Panc1 (cell line): ENCODE measurements at regions of chr5 and their contacts with region 1.

Region 1: DNA sequence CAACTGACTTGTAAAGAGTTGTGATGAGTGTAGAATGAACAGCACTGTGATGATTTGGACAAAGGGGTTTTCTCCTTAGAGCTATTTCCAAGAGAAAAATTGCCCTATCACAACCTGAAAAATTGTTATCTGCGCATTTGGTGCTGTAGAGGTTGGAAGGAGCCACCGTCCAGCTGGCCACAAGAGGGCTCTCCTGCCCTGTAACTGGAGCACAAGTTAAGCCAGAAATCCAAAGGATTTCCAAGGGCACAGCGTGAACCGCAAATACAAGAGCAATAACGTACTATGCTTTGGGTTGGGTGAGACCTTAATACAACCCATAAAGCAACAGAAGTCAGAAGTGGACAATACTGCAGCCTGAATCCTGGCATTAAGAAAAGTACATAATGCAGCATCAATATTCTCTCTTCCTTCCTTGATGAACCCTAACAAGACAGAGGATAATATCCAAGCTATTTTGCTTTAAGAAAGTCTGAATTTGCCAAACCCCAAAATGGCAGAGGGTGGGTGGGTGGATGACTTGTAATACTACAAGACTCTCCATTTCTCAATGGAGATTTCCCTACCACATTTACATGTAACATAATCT is 56.8 kb upstream of the SMIM32 start:
- DNase-seq: peak; percentile 43
- ATAC-seq: peak; percentile 93
- H3K4me3 ChIP-seq: no peak overlapping the region
- H3K27ac ChIP-seq: no peak overlapping the region
- H3K4me1 ChIP-seq: no peaks in the 10 kb centered on the region
- H3K27me3 ChIP-seq: peaks cover 2% of the 10 kb centered on the region; the same call in 1 of the 2 replicates
- CTCF ChIP-seq: peak; percentile 94

Region 2: DNA sequence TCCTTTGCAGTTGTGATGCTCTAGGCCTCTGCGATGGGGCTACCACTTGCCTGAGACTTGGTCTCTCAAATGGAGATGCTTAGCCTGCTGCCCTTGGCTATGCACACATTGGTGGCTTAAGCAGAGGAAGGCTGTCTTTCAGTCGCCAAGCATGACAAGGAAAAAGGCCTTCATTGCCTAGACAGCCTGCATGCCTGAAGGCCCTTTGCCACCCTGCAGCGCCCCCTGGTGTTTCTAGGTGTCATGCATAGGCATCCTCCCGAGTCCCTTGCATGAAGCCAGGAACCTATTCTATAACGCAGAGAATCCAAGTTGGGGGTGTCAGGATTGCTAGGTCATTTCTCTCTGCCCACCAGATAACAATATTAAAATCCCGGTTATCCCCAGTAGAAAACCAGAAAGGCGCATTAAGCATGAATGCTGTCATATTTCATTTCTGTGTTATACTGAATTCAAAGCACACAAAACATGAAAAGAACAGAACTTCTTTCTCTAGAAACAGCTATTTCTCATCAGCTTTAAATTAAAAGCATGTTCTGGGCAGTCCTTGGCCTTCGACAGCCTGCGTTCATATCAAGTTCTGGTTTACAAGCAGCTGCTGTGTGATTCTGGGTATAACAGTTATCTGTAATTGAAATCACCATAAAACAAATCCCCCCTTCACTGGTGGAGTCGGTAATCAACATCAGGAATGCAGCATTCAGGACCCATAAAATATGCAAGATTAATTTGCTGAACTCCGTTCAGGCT is 175.2 kb after region 1 on chr5:
- CTCF ChIA-PET with region 1: no interaction called
- POLR2A ChIA-PET with region 1: no interaction called
- in situ Hi-C with region 1: no loop called
- intact Hi-C with region 1: loop called (anchors 1 kb)
- DNase-seq: peak; percentile 25
- ATAC-seq: peak; percentile 87
- H3K4me3 ChIP-seq: no peak overlapping the region
- H3K27ac ChIP-seq: no peak overlapping the region
- H3K4me1 ChIP-seq: no peaks in the 10 kb centered on the region
- H3K27me3 ChIP-seq: no peaks in the 10 kb centered on the region
- CTCF ChIP-seq: peak; percentile 85

Region 3: DNA sequence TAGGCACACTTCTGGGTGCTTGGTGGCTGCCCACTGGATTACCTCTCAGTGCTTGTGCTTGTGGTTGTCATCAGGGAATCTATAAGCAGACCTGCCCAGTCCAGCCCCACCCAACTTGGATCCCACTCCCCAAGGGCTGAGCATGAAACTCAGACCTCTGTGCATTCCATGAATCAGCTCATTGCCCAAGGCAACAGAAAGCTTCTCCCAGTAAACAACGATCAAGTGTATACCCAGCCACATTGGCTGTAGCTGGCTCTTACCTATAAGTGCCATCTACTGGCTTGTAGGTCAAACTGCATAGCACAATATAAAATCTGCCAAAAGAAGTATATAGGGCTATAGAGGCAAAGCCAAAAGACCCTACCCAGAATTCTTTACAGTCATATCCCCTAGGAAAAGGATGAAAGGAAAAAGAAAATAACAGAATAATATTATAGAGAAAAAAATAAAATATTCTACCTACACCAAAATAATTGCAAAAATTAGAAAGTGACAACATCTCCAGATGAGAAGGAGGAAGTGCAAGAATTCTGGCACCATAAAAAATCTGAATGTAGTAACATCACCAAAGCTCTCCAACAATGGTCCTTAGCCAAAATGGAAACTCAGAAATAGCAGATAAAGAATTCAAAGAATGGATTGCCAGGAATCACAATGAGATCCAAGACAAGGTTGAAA is 436.6 kb after region 1 on chr5:
- CTCF ChIA-PET with region 1: no interaction called
- POLR2A ChIA-PET with region 1: no interaction called
- in situ Hi-C with region 1: no loop called
- intact Hi-C with region 1: loop called (anchors 5 kb)
- DNase-seq: peak; percentile 1
- ATAC-seq: no peak
- H3K4me3 ChIP-seq: no peak overlapping the region
- H3K27ac ChIP-seq: no peak overlapping the region
- H3K4me1 ChIP-seq: no peaks in the 10 kb centered on the region
- H3K27me3 ChIP-seq: no peaks in the 10 kb centered on the region
- CTCF ChIP-seq: peak; percentile 43